SK-N-SH (cell line): ENCODE measurements at regions of chr7 and their contacts with region 1.

Region 1: GRCh38 chr7:132394283-132395198 is 181.7 kb downstream of the PLXNA4 start:
- DNase-seq: peak; percentile 41
- H3K4me3 ChIP-seq: no peak overlapping the region
- H3K27ac ChIP-seq: peak overlapping the region in 1 of 2 experiments; percentile 14; a peak in 1 of 4 replicates
- H3K4me1 ChIP-seq: peaks cover 0 to 37% of the 10 kb centered on the region in 2 experiments; a peak in 1 of 4 replicates
- H3K27me3 ChIP-seq: no peaks in the 10 kb centered on the region
- CTCF ChIP-seq: peak; percentile 58
- EP300 ChIP-seq: no peak
- RAD21 ChIP-seq: peak; percentile 81

Region 2: GRCh38 chr7:132500727-132501440 is 106.3 kb after region 1 on chr7:
- CTCF ChIA-PET with region 1: interaction called, 15 read pairs
- POLR2A ChIA-PET with region 1: no interaction called
- DNase-seq: peak; percentile 43
- H3K4me3 ChIP-seq: no peak overlapping the region
- H3K27ac ChIP-seq: no peak overlapping the region; a peak in 1 of 4 replicates
- H3K4me1 ChIP-seq: peaks cover 0 to 72% of the 10 kb centered on the region in 2 experiments; a peak in 2 of 4 replicates
- H3K27me3 ChIP-seq: no peaks in the 10 kb centered on the region
- CTCF ChIP-seq: peak; percentile 57
- EP300 ChIP-seq: no peak
- RAD21 ChIP-seq: peak; percentile 61

Region 3: GRCh38 chr7:132557489-132558044 is 163.0 kb after region 1 on chr7:
- CTCF ChIA-PET with region 1: interaction called, 12 read pairs
- POLR2A ChIA-PET with region 1: no interaction called
- DNase-seq: no peak
- H3K4me3 ChIP-seq: no peak overlapping the region
- H3K27ac ChIP-seq: no peak overlapping the region
- H3K4me1 ChIP-seq: peaks cover 0 to 7% of the 10 kb centered on the region in 2 experiments; a peak in 1 of 4 replicates
- H3K27me3 ChIP-seq: no peaks in the 10 kb centered on the region
- CTCF ChIP-seq: peak; percentile 46
- EP300 ChIP-seq: no peak
- RAD21 ChIP-seq: peak; percentile 72

Region 4: DNA sequence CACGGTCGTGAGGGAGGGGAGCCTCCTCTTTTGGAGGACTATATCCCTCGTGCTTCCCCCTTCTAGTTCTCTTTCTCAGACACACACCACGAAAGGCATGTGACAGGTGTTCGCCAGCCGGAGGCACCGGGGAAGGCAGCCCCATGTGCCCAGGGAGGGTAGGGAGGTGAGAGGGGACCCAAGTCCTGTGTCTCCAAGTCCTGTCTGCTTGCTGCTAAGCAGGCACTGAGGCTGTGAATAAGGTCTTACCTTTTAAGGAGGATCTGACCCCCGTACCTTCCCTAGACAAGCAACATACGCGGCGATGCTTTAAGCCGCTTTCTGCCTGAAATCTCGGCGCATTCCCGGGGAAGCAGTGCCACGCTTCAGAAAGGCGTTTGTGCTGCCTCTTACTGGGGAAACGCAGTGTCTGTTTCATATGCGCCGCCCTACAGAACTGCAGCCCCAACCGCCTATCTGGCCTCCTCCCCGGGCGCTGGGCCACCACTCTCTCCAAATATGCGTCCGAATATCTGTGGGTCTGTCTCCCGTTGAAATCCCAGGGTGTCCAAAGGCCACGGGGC is 181.0 kb after region 1 on chr7:
- CTCF ChIA-PET with region 1: interaction called, 121 read pairs
- POLR2A ChIA-PET with region 1: no interaction called
- DNase-seq: peak; percentile 84
- H3K4me3 ChIP-seq: peak overlapping the region; percentile 48 to 74
- H3K27ac ChIP-seq: no peak overlapping the region; a peak in 1 of 4 replicates
- H3K4me1 ChIP-seq: peaks cover 0 to 44% of the 10 kb centered on the region in 2 experiments; a peak in 2 of 4 replicates
- H3K27me3 ChIP-seq: peaks cover 17% of the 10 kb centered on the region; the same call in 1 of the 2 replicates
- CTCF ChIP-seq: peak; percentile 44
- EP300 ChIP-seq: no peak
- RAD21 ChIP-seq: peak; percentile 71